Calu3 (cell line): ENCODE measurements at regions of chr3 and their contacts with region 1.

Region 1: GRCh38 chr3:195442573-195443390 is at the start of gene ACAP2:
- DNase-seq: peak; percentile 100
- H3K4me3 Mint-ChIP-seq: peak within 1 kb of the TSS; percentile 100
- H3K27ac Mint-ChIP-seq: peak within 1 kb of the TSS; percentile 94
- H3K4me1 Mint-ChIP-seq: peaks cover 32% of the 10 kb centered on the region
- H3K27me3 Mint-ChIP-seq: no peaks in the 10 kb centered on the region
- CTCF ChIP-seq: no peak
- total RNA-seq, gene ACAP2: 74.0 TPM in 2 replicates

Region 2: GRCh38 chr3:195319060-195319459 is 123.7 kb before region 1 on chr3:
- CTCF ChIA-PET with region 1: no interaction called
- intact Hi-C with region 1: no loop called
- DNase-seq: no peak
- H3K4me3 Mint-ChIP-seq: no peak overlapping the region
- H3K27ac Mint-ChIP-seq: no peak overlapping the region
- H3K4me1 Mint-ChIP-seq: no peaks in the 10 kb centered on the region
- H3K27me3 Mint-ChIP-seq: no peaks in the 10 kb centered on the region
- CTCF ChIP-seq: no peak

Region 3: GRCh38 chr3:195352895-195353488 is 89.8 kb before region 1 on chr3:
- CTCF ChIA-PET with region 1: no interaction called
- intact Hi-C with region 1: loop called (anchors 5 kb)
- DNase-seq: peak; percentile 47
- H3K4me3 Mint-ChIP-seq: no peak overlapping the region
- H3K27ac Mint-ChIP-seq: peak overlapping the region; percentile 80
- H3K4me1 Mint-ChIP-seq: peaks cover 25% of the 10 kb centered on the region
- H3K27me3 Mint-ChIP-seq: no peaks in the 10 kb centered on the region
- CTCF ChIP-seq: no peak